ENCODE measurements at regions of chr1 and their contacts with region 1.

Region 1: GRCh38 chr1:2044510-2045319 is 5.5 kb upstream of the PRKCZ start:
- DNase-seq: peak; percentile 80
- H3K4me3 Mint-ChIP-seq: no peak overlapping the region
- H3K27ac Mint-ChIP-seq: no peak overlapping the region
- H3K4me1 Mint-ChIP-seq: peaks cover 17% of the 10 kb centered on the region
- H3K27me3 Mint-ChIP-seq: peaks cover 40% of the 10 kb centered on the region
- CTCF ChIP-seq: peak; percentile 68

Region 2: GRCh38 chr1:1894354-1895059 is 150.2 kb before region 1 on chr1:
- CTCF ChIA-PET with region 1: no interaction called
- intact Hi-C with region 1: no loop called
- DNase-seq: no peak
- H3K4me3 Mint-ChIP-seq: no peak overlapping the region
- H3K27ac Mint-ChIP-seq: no peak overlapping the region
- H3K4me1 Mint-ChIP-seq: peaks cover 18% of the 10 kb centered on the region
- H3K27me3 Mint-ChIP-seq: no peaks in the 10 kb centered on the region
- CTCF ChIP-seq: no peak

Region 3: GRCh38 chr1:1959840-1960479 is 84.8 kb before region 1 on chr1:
- CTCF ChIA-PET with region 1: interaction called, 22 read pairs
- intact Hi-C with region 1: loop called (anchors 5 kb)
- DNase-seq: peak; percentile 90
- H3K4me3 Mint-ChIP-seq: peak overlapping the region; percentile 40
- H3K27ac Mint-ChIP-seq: no peak overlapping the region
- H3K4me1 Mint-ChIP-seq: peaks cover 10% of the 10 kb centered on the region
- H3K27me3 Mint-ChIP-seq: peaks cover 57% of the 10 kb centered on the region
- CTCF ChIP-seq: peak; percentile 86